Natural killer cell (primary cell): ENCODE measurements at regions of chr19 and their contacts with region 1.

Region 1: DNA sequence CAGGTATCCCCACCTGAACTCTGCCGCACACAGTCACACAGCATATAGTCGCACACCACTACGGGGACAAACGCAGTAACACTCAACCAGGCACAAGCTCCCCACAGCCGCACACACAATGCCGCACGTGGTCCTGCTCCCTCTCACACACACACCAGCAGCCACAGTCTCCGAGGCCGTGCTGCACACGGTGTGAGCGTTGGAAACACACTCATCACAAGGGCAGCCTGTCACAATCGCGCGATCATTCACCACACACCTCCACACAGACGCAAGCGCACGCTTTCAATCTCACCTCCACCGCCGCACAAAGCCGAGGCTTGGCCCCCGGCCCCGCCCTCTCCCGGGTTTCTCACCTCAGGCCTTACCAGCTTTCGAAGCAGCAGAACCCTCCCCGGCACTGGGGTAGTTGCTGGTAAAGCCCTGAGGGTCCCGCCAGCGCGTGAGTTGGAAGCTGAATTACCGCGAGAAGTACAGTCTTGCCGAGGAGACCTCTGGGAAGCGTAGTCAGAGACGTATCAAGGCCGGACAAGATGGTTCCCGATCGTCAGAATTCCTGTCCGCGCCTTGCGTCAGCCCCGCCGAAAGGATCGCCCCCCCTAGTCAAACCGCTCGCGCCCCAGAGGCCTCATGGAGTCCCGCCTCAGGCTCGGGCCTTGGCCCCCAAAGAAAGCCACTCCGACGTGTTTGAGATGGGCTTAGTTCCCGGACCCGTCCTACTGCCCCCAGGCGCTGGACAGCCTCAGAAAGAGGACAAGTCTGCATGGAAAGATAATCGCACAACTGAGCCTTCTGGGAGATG is at the start of gene ZNF566:
- DNase-seq: peak; percentile 84 to 96
- ATAC-seq: peak; percentile 83 to 94 (median 90)
- H3K4me3 ChIP-seq: peak within 1 kb of the TSS; percentile 69
- H3K4me3 Mint-ChIP-seq: peak within 1 kb of the TSS; percentile 99
- H3K27ac ChIP-seq: peak within 1 kb of the TSS; percentile 85
- H3K27ac Mint-ChIP-seq: peak within 1 kb of the TSS; percentile 97 to 100
- H3K4me1 ChIP-seq: peaks cover 14% of the 10 kb centered on the region
- H3K4me1 Mint-ChIP-seq: peaks cover 29 to 31% of the 10 kb centered on the region in 2 donors
- H3K27me3 ChIP-seq: no peaks in the 10 kb centered on the region
- H3K27me3 Mint-ChIP-seq: no peaks in the 10 kb centered on the region
- CTCF ChIP-seq: no peak
- total RNA-seq, gene ZNF566: 7.9 to 16.0 (median 12.4) TPM

Region 2: DNA sequence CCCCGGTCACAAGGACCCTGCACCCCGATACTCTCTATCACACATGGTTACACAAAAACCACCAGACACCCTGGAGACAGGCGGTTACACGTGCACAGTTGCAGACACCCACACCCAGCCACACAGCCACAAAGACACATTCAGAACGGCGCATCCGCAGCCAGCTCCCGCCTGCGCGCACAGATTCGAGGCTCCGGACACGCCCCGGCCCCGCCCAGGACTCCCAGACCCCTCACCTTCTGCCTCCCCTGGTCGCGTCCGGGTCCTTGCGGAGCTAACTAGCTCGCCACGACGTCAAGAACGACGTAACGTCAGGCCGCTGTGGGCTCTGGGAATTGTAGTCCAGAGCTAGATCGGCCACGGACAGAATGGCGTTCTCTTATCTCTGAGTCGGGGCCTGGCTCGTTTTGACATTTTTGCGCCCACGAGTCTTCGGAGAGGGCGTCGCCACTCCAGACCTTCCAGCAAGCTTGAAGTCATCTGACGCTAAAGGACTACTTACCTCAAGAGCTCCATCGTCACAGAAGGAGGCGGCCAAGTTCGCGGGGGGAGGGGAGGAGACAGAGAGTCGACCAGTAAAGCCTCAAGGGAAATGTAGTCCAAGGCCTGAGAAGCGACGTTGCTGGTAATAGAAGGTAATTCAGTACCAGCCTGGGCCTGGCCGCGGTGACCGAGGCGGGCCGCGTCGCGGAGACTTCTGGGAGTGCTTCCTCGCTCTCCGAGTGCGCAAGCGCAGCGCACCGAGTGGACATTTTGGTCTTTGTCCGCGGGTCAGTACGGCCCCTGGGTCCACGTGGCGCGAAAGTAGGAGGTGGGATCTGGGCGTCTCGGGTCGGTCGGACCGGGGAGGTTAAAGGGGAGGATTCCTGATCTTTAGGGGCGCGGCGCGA is 274.7 kb before region 1 on chr19 and contains the starts of genes ZNF146 and ZNF565:
- intact Hi-C with region 1: loop called (anchors 1 kb)
- DNase-seq: peak; percentile 90 to 97
- ATAC-seq: peak; percentile 81 to 95 (median 86)
- H3K4me3 ChIP-seq: peak within 1 kb of the TSS; percentile 92
- H3K4me3 Mint-ChIP-seq: no peak within 1 kb of the TSS
- H3K27ac ChIP-seq: peak within 1 kb of the TSS; percentile 91
- H3K27ac Mint-ChIP-seq: no peak within 1 kb of the TSS
- H3K4me1 ChIP-seq: peaks cover 18% of the 10 kb centered on the region
- H3K4me1 Mint-ChIP-seq: peaks cover 12 to 14% of the 10 kb centered on the region in 2 donors
- H3K27me3 ChIP-seq: no peaks in the 10 kb centered on the region
- H3K27me3 Mint-ChIP-seq: no peaks in the 10 kb centered on the region
- CTCF ChIP-seq: no peak
- total RNA-seq, gene ZNF146: 20.3 to 37.3 (median 21.5) TPM
- total RNA-seq, gene ZNF565: 7.7 to 19.1 (median 10.5) TPM

Region 3: GRCh38 chr19:36508325-36508724 is 19.0 kb after region 1 on chr19:
- intact Hi-C with region 1: no loop called
- DNase-seq: no peak
- ATAC-seq: no peak
- H3K4me3 ChIP-seq: no peak overlapping the region
- H3K4me3 Mint-ChIP-seq: no peak overlapping the region
- H3K27ac ChIP-seq: no peak overlapping the region
- H3K27ac Mint-ChIP-seq: no peak overlapping the region
- H3K4me1 ChIP-seq: no peaks in the 10 kb centered on the region
- H3K4me1 Mint-ChIP-seq: no peaks in the 10 kb centered on the region
- H3K27me3 ChIP-seq: no peaks in the 10 kb centered on the region
- H3K27me3 Mint-ChIP-seq: no peaks in the 10 kb centered on the region
- CTCF ChIP-seq: no peak

Region 4: GRCh38 chr19:36573020-36573885 is 83.9 kb after region 1 on chr19 and contains the start of gene ZNF529:
- intact Hi-C with region 1: loop called (anchors 1 kb)
- DNase-seq: peak; percentile 88 to 95
- ATAC-seq: peak; percentile 90 to 97 (median 90)
- H3K4me3 ChIP-seq: peak within 1 kb of the TSS; percentile 83
- H3K4me3 Mint-ChIP-seq: peak within 1 kb of the TSS; percentile 89
- H3K27ac ChIP-seq: peak within 1 kb of the TSS; percentile 86
- H3K27ac Mint-ChIP-seq: peak within 1 kb of the TSS; percentile 91 to 100
- H3K4me1 ChIP-seq: peaks cover 17% of the 10 kb centered on the region
- H3K4me1 Mint-ChIP-seq: peaks cover 36% of the 10 kb centered on the region in 2 donors
- H3K27me3 ChIP-seq: no peaks in the 10 kb centered on the region
- H3K27me3 Mint-ChIP-seq: no peaks in the 10 kb centered on the region
- CTCF ChIP-seq: no peak
- total RNA-seq, gene ZNF529: 23.5 to 36.4 (median 29.2) TPM

Region 5: GRCh38 chr19:36665832-36666231 is 176.5 kb after region 1 on chr19:
- intact Hi-C with region 1: loop called (anchors 10 kb)
- DNase-seq: peak in 1 of 2 donors; percentile 10
- ATAC-seq: no peak
- H3K4me3 ChIP-seq: peak overlapping the region; percentile 80
- H3K4me3 Mint-ChIP-seq: peak overlapping the region; percentile 100
- H3K27ac ChIP-seq: no peak overlapping the region
- H3K27ac Mint-ChIP-seq: peak overlapping the region; percentile 98
- H3K4me1 ChIP-seq: peaks cover 20% of the 10 kb centered on the region
- H3K4me1 Mint-ChIP-seq: peaks cover 34 to 40% of the 10 kb centered on the region in 2 donors
- H3K27me3 ChIP-seq: no peaks in the 10 kb centered on the region
- H3K27me3 Mint-ChIP-seq: no peaks in the 10 kb centered on the region
- CTCF ChIP-seq: no peak

Region 6: DNA sequence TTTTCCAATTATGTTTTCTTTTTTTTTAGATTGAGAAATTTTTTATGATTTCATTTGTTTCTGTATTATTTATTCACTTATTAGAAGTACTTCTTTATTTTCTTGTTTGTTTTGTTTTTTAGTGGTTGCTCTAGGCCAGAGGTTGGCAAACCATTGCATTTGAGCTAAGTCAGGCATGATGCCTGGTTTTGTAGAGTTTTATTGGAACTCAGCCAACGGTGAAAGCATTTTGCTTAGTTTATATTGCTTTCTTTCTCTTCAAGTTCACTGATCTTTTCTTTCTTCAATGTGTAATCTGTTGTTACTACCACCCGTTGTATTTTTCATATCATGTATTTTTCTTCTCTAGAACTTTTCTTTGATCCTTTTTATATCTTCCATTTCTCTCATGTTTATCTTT is 217.8 kb after region 1 on chr19:
- intact Hi-C with region 1: no loop called
- DNase-seq: no peak
- ATAC-seq: no peak
- H3K4me3 ChIP-seq: no peak overlapping the region
- H3K4me3 Mint-ChIP-seq: no peak overlapping the region
- H3K27ac ChIP-seq: no peak overlapping the region
- H3K27ac Mint-ChIP-seq: no peak overlapping the region
- H3K4me1 ChIP-seq: no peaks in the 10 kb centered on the region
- H3K4me1 Mint-ChIP-seq: peaks cover 0 to 11% of the 10 kb centered on the region in 2 donors
- H3K27me3 ChIP-seq: no peaks in the 10 kb centered on the region
- H3K27me3 Mint-ChIP-seq: no peaks in the 10 kb centered on the region
- CTCF ChIP-seq: no peak

Region 7: GRCh38 chr19:36915992-36916830 is 426.9 kb after region 1 on chr19 and contains the starts of genes ZNF568 and ZNF829:
- intact Hi-C with region 1: loop called (anchors 2 kb)
- DNase-seq: peak; percentile 90 to 96
- ATAC-seq: peak; percentile 92 to 98 (median 94)
- H3K4me3 ChIP-seq: peak within 1 kb of the TSS; percentile 66
- H3K4me3 Mint-ChIP-seq: peak within 1 kb of the TSS; percentile 87
- H3K27ac ChIP-seq: peak within 1 kb of the TSS; percentile 95
- H3K27ac Mint-ChIP-seq: peak within 1 kb of the TSS; percentile 89 to 93
- H3K4me1 ChIP-seq: peaks cover 13% of the 10 kb centered on the region
- H3K4me1 Mint-ChIP-seq: peaks cover 35% of the 10 kb centered on the region in 2 donors
- H3K27me3 ChIP-seq: no peaks in the 10 kb centered on the region
- H3K27me3 Mint-ChIP-seq: no peaks in the 10 kb centered on the region
- CTCF ChIP-seq: peak; percentile 75
- total RNA-seq, gene ZNF568: 9.4 to 15.5 (median 15.3) TPM
- total RNA-seq, gene ZNF829: 5.5 to 7.6 (median 5.5) TPM